CD8-positive, alpha-beta T cell (primary cell): ENCODE measurements at regions of chr20 and their contacts with region 1.

Region 1: DNA sequence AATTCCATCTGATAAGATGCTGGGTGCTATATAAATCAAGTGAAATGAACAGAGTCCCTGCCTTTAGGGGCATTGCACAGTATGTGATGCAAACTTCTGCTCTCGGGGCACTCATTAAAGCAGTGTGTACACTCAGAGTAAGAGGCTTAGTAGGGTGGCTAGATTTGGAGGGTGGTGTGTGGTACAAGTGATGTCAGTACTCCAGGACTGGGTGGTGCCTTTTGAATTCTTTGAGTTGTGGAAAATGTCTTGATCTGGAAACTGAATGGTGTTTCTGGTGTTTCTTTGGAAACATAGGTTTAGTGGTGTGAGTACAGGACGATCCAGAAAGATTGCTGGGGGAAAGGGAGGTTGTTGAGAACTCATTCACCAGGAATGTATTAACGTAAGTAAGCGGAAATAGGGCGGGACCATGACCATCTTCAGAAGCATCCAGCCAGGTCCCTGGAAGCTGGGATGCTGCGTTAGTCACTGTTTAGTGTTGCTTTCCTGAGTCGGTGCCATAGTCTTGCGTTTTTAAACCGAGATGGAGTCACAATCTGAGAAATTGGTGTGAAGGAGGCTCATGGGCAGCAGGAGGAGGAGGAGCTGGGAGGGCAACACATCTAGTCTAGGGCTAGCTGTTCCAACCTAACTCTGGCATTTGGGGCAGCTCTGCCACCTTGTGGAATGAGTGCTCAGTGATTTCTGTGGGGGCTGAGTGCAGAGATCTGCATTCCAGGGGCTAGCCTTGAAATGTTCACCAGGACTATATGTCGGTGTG is 70.3 kb downstream of the SCAND1 start:
- DNase-seq: peak; percentile 30 to 75 (median 60)
- ATAC-seq: peak; percentile 91
- H3K4me3 ChIP-seq: no peak overlapping the region
- H3K4me3 Mint-ChIP-seq: no peak overlapping the region
- H3K27ac ChIP-seq: no peak overlapping the region
- H3K27ac Mint-ChIP-seq: no peak overlapping the region
- H3K4me1 ChIP-seq: peaks cover 6% of the 10 kb centered on the region
- H3K4me1 Mint-ChIP-seq: peaks cover 17% of the 10 kb centered on the region
- H3K27me3 ChIP-seq: no peaks in the 10 kb centered on the region
- H3K27me3 Mint-ChIP-seq: no peaks in the 10 kb centered on the region
- CTCF ChIP-seq: peak; percentile 60

Region 2: GRCh38 chr20:35303735-35304491 is 580.0 kb before region 1 on chr20:
- CTCF ChIA-PET with region 1: no interaction called
- POLR2A ChIA-PET with region 1: no interaction called
- intact Hi-C with region 1: loop called in 1 of 2 experiments (anchors 10 kb)
- DNase-seq: peak; percentile 62 to 90 (median 82)
- ATAC-seq: peak; percentile 95
- H3K4me3 ChIP-seq: no peak overlapping the region
- H3K4me3 Mint-ChIP-seq: no peak overlapping the region
- H3K27ac ChIP-seq: no peak overlapping the region
- H3K27ac Mint-ChIP-seq: no peak overlapping the region
- H3K4me1 ChIP-seq: peaks cover 4% of the 10 kb centered on the region
- H3K4me1 Mint-ChIP-seq: peaks cover 4% of the 10 kb centered on the region
- H3K27me3 ChIP-seq: no peaks in the 10 kb centered on the region
- H3K27me3 Mint-ChIP-seq: no peaks in the 10 kb centered on the region
- CTCF ChIP-seq: peak; percentile 85

Region 3: DNA sequence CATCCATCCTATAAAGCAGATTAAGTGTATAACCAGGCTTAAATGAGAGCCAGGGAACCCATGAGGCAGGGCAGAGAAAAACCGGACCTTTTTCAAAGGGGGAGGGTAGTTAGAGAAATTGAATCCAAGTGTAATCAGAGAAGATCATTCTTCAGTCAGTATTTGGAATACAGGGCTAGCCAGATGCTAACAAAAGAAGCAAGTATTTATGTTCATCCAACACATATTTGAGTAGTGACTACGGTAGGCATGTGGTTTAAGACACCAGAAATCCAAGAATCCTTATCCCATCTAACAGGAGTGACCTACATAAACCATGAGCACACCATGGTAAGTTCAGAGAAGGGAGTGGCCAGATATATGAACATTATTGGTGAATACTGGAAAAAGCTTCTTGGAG is 545.0 kb before region 1 on chr20:
- CTCF ChIA-PET with region 1: no interaction called
- POLR2A ChIA-PET with region 1: no interaction called
- intact Hi-C with region 1: no loop called
- DNase-seq: no peak
- ATAC-seq: no peak
- H3K4me3 ChIP-seq: no peak overlapping the region
- H3K4me3 Mint-ChIP-seq: no peak overlapping the region
- H3K27ac ChIP-seq: no peak overlapping the region
- H3K27ac Mint-ChIP-seq: no peak overlapping the region
- H3K4me1 ChIP-seq: no peaks in the 10 kb centered on the region
- H3K4me1 Mint-ChIP-seq: no peaks in the 10 kb centered on the region
- H3K27me3 ChIP-seq: no peaks in the 10 kb centered on the region
- H3K27me3 Mint-ChIP-seq: no peaks in the 10 kb centered on the region
- CTCF ChIP-seq: no peak

Region 4: DNA sequence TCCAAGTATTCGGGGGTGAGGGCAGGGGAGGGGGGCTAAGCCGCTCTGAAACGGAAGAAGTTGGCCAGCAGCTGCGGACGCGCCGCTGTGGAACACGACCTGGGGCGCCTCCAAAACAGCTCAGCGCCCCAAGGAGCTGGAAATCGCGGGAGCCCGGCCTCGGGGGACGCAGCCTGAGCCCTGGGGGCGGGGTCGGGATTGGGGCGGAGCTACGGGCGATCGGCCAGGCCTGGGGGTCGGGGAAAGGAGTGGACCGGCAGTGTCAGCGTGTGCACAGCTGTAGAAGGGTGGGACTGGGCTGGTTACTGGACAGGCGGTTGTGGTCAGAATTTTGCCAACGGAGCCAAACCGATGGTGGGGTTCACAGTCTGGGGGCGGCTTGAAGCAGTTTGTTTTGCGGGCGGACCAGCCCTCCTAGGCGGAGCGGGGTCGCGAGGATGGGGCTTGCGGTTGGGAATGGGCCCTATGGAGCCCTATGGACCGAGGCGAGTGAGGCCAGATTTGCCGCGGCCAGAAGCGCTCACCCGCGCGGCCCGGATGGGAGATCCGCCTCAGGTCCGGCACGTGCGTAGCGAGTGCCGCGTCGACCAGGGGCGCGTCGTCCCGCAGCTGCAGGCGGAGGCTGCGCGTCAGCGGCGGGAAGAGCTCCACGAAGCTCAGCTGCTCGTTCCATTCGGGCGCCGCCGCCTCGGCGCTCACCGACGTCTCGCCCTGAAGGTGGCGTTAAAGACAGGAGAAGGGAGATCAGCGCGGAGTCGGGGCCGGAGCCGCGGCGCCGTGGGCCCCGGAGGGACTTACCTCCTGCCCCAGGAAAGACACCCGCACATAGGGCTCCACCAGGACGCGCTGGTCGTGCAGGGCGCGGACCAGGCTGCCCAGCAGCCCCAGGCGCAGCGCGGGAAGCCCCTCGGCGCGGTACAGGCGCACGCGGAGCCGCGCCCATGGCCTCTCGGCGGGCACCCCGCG is 282.7 kb before region 1 on chr20:
- CTCF ChIA-PET with region 1: interaction called, 7 read pairs
- POLR2A ChIA-PET with region 1: no interaction called
- intact Hi-C with region 1: loop called in 1 of 2 experiments (anchors 1 kb)
- DNase-seq: peak; percentile 59 to 90 (median 83)
- ATAC-seq: peak; percentile 92
- H3K4me3 ChIP-seq: peak overlapping the region; percentile 58 to 59
- H3K4me3 Mint-ChIP-seq: peak overlapping the region; percentile 82
- H3K27ac ChIP-seq: no peak overlapping the region
- H3K27ac Mint-ChIP-seq: no peak overlapping the region
- H3K4me1 ChIP-seq: peaks cover 16% of the 10 kb centered on the region
- H3K4me1 Mint-ChIP-seq: peaks cover 11% of the 10 kb centered on the region
- H3K27me3 ChIP-seq: peaks cover 5 to 8% of the 10 kb centered on the region in 2 experiments
- H3K27me3 Mint-ChIP-seq: peaks cover 14% of the 10 kb centered on the region
- CTCF ChIP-seq: peak; percentile 66

Region 5: GRCh38 chr20:35680452-35681183 is 203.3 kb before region 1 on chr20:
- CTCF ChIA-PET with region 1: no interaction called
- POLR2A ChIA-PET with region 1: no interaction called
- intact Hi-C with region 1: loop called in 1 of 2 experiments (anchors 10 kb)
- DNase-seq: no peak
- ATAC-seq: no peak
- H3K4me3 ChIP-seq: no peak overlapping the region
- H3K4me3 Mint-ChIP-seq: no peak overlapping the region
- H3K27ac ChIP-seq: no peak overlapping the region
- H3K27ac Mint-ChIP-seq: no peak overlapping the region
- H3K4me1 ChIP-seq: no peaks in the 10 kb centered on the region
- H3K4me1 Mint-ChIP-seq: no peaks in the 10 kb centered on the region
- H3K27me3 ChIP-seq: no peaks in the 10 kb centered on the region
- H3K27me3 Mint-ChIP-seq: no peaks in the 10 kb centered on the region
- CTCF ChIP-seq: no peak

Region 6: GRCh38 chr20:35718972-35719635 is 164.9 kb before region 1 on chr20:
- CTCF ChIA-PET with region 1: no interaction called
- POLR2A ChIA-PET with region 1: no interaction called
- intact Hi-C with region 1: loop called in 1 of 2 experiments (anchors 10 kb)
- DNase-seq: no peak
- ATAC-seq: no peak
- H3K4me3 ChIP-seq: no peak overlapping the region
- H3K4me3 Mint-ChIP-seq: no peak overlapping the region
- H3K27ac ChIP-seq: no peak overlapping the region
- H3K27ac Mint-ChIP-seq: peak overlapping the region; percentile 74
- H3K4me1 ChIP-seq: peaks cover 38% of the 10 kb centered on the region
- H3K4me1 Mint-ChIP-seq: peaks cover 60% of the 10 kb centered on the region
- H3K27me3 ChIP-seq: no peaks in the 10 kb centered on the region
- H3K27me3 Mint-ChIP-seq: no peaks in the 10 kb centered on the region
- CTCF ChIP-seq: no peak

Region 7: GRCh38 chr20:35912881-35913280 is 28.9 kb after region 1 on chr20:
- CTCF ChIA-PET with region 1: no interaction called
- POLR2A ChIA-PET with region 1: no interaction called
- intact Hi-C with region 1: no loop called
- DNase-seq: no peak
- ATAC-seq: no peak
- H3K4me3 ChIP-seq: no peak overlapping the region
- H3K4me3 Mint-ChIP-seq: no peak overlapping the region
- H3K27ac ChIP-seq: no peak overlapping the region
- H3K27ac Mint-ChIP-seq: no peak overlapping the region
- H3K4me1 ChIP-seq: no peaks in the 10 kb centered on the region
- H3K4me1 Mint-ChIP-seq: peaks cover 7% of the 10 kb centered on the region
- H3K27me3 ChIP-seq: no peaks in the 10 kb centered on the region
- H3K27me3 Mint-ChIP-seq: no peaks in the 10 kb centered on the region
- CTCF ChIP-seq: no peak

Region 8: DNA sequence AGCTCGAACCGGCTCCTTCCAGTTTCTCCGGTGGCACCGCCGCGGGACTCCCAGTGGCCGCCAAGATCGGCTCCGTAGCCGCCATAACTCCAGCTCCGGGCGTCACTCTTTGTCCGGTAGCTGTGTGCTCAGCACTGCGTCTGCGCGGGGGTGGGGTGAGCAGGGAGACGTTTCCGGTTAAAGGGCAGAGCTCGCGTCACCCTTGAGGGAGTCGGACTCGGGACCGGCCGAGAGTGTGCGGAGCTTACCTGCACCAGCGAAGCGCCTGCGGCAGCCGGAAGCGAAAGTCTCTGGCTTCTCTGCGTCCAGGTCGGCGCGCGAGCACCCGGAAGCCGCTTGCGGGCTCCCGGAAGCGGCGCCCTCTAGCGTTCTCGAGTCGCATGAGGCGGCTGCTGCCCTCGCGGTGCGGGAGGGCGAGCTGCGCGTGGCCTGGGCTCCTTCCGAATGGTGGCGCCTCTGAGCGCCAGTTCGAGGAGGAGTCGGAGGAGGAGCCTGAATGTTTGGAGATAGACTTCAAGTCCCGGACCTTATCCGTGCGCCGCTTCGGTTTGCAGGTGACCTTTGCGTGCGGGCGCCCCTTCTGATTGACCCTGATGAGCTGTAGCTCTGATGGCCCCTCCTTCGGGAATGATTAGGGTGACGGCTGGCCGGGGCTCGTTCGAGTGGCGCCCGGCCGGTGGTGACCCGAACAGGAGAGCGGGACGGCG is 70.4 kb after region 1 on chr20 and contains the start of gene SCAND1:
- CTCF ChIA-PET with region 1: no interaction called
- POLR2A ChIA-PET with region 1: no interaction called
- intact Hi-C with region 1: no loop called
- DNase-seq: peak; percentile 93 to 99 (median 96)
- ATAC-seq: peak; percentile 84
- H3K4me3 ChIP-seq: peak within 1 kb of the TSS; percentile 77 to 95
- H3K4me3 Mint-ChIP-seq: peak within 1 kb of the TSS; percentile 99
- H3K27ac ChIP-seq: peak within 1 kb of the TSS; percentile 99
- H3K27ac Mint-ChIP-seq: peak within 1 kb of the TSS; percentile 99
- H3K4me1 ChIP-seq: peaks cover 23% of the 10 kb centered on the region
- H3K4me1 Mint-ChIP-seq: peaks cover 25% of the 10 kb centered on the region
- H3K27me3 ChIP-seq: no peaks in the 10 kb centered on the region
- H3K27me3 Mint-ChIP-seq: no peaks in the 10 kb centered on the region
- CTCF ChIP-seq: peak; percentile 97
- total RNA-seq, gene SCAND1: 94.8 to 100 TPM